ENCODE measurements at regions of chr17 and their contacts with region 1.

Region 1: DNA sequence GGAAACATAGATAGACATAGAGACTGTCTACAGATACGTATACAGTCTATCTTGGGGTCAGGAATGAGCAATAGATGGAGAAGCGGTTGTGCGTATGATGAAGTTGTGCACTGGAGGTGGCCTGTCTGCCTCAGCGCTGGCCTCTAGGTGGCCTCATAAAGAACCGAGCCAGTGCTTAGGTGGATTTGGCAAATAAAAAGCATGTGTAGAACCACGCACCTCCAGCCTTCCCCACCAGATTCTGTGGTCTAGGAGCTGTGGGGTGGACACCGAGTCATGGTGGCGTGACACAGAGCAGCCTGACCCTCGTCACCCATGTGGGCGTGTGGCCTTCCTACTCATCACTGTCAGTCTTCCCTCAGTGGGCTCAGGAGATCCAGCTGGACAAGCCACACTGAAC is 34.0 kb downstream of the PGS1 start:
- DNase-seq: peak; percentile 63
- H3K4me3 Mint-ChIP-seq: peak overlapping the region; percentile 83
- H3K27ac Mint-ChIP-seq: peak overlapping the region; percentile 96
- H3K4me1 Mint-ChIP-seq: peaks cover 93% of the 10 kb centered on the region
- H3K27me3 Mint-ChIP-seq: no peaks in the 10 kb centered on the region

Region 2: DNA sequence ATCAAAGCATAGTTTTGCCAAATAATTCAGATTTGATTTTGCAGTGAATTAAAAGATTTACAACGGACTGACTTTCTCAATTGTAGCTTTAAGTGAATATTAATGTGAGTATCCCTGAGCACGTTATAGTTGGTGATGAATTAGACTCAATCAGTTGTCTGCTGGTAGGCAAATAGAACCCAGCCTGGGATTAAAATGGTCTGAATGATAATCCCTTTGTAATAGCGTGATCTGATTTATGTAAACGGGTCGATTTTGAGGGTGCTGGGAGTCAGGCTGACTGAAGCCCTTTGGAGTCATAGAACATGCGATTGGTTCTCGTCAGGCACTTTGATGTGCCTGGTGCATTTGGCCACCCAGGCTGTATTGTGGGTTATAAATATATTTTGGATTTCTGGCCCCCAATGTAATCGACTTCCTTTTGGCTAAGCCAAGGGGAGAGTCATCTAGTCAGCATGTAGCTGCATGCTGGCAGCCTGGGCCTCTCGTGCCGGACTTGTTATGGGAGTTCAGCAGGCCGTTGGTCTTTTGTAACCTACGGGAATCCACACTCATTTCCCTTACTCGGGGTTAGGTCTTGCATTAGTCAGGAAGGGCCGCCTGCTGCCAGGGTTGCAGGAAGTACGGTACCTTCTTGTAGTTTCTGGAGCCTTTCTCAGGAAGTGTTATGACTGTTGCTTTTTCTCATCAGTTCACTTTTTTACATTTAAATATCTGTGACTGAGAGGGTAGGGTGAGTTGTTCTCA is 28.5 kb before region 1 on chr17:
- CTCF ChIA-PET with region 1: interaction called, 22 read pairs
- POLR2A ChIA-PET with region 1: interaction called, 4 read pairs
- DNase-seq: peak; percentile 66
- H3K4me3 Mint-ChIP-seq: peak overlapping the region; percentile 68
- H3K27ac Mint-ChIP-seq: peak overlapping the region; percentile 91
- H3K4me1 Mint-ChIP-seq: peaks cover 87% of the 10 kb centered on the region
- H3K27me3 Mint-ChIP-seq: no peaks in the 10 kb centered on the region

Region 3: GRCh38 chr17:78432226-78433012 is 20.0 kb after region 1 on chr17:
- CTCF ChIA-PET with region 1: no interaction called
- POLR2A ChIA-PET with region 1: no interaction called
- DNase-seq: no peak
- H3K4me3 Mint-ChIP-seq: no peak overlapping the region
- H3K27ac Mint-ChIP-seq: no peak overlapping the region
- H3K4me1 Mint-ChIP-seq: no peaks in the 10 kb centered on the region
- H3K27me3 Mint-ChIP-seq: no peaks in the 10 kb centered on the region

Measured in activated CD4-positive, alpha-beta memory T cell treated with anti-CD3 and anti-CD28 coated beads, Interleukin-2, amount 10 ng/mL, durations not matched to agents 7 days and 5 days (primary cell).